Activated naive CD4-positive, alpha-beta T cell treated with anti-CD3 and anti-CD28 coated beads for 36 hours (primary cell): ENCODE measurements at regions of chr1 and their contacts with region 1.

Region 1: DNA sequence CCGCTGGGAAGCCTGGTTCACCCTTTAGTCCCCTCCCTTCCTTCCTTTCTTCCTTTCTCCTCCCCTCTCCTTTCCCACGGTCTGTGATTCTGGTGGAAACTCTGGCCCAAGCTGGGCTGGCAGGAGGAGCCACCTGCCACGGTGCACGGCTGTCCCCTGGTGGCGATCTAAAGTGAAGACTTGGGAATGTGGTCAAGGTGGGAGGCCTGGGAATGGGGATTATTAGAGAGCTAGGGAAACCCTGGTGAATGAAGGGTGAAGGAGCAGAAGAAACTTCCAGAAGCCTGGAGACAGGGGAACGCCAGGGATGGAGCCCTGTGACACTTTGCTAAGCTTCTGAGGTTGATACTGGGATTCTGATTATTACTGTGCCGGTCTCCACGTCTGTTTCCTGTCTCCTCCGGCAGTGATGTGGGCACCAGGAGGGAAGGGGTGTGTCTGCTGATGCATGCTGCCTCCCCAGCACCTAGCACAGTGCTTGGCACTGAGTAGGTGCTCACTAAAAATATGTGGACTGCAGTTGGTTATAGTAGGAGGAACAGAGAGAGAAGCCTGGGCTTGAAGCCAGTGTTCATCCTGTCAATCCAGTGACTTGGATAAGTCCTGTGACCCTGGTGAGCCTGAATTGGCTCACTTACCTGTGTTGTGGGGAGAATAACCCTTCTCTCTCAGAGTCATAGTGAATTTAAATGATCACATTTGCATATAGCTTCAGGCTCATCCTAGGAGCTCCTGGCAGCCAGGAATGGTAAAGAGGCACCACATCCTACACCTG is 71.2 kb upstream of the NBPF3 start:
- DNase-seq: peak; percentile 70
- H3K4me3 Mint-ChIP-seq: no peak overlapping the region
- H3K27ac Mint-ChIP-seq: peak overlapping the region; percentile 43
- H3K4me1 Mint-ChIP-seq: peaks cover 12% of the 10 kb centered on the region
- H3K27me3 Mint-ChIP-seq: no peaks in the 10 kb centered on the region

Region 2: DNA sequence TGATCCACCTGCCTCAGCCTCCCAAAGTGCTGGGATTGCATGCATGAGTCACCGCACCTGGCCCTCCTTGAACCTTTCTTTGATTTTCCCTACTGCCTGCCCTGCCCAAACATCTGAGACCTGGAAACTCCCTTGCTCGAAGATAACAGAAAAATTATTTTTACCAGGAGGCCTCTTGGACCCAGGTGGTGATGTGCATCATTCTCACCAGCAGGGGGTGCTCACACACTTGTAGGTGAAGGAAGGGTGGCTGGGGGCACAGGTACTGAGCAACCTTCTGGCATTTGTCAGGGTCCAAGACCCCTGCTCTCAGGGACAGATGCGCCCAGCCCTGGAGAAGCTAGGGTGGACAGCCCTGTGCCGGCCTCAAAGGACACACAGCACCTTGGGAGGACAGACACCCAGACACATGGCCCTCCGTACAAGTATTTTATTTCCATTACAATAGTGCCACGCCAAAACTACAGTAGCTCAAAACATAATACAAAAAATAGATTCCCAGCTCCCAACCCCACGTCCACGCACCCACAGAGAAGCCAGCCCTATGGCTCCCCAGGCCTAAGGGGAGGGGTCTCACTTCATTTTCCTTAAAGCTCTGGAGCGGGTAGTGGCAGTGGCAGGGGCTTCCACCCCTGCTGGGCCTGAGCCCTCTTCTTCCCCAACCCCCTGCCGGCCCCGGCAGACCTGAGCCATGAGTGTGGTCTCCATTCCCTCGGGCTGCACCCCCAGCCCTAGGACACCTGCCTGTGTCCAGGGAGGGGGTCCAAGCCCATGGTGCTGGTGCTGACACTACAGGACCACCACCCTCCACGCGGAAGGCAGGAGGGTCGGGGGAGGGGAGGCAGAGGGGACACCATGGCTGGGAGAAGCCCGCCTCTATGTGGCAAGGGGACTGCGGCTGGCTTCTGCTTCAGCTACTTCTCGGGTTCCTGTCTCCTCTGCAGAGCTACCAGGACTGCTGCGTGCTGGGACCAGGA is 151.6 kb before region 1 on chr1:
- CTCF ChIA-PET with region 1: interaction called, 45 read pairs
- intact Hi-C with region 1: loop called (anchors 1 kb)
- DNase-seq: peak; percentile 89
- H3K4me3 Mint-ChIP-seq: no peak overlapping the region
- H3K27ac Mint-ChIP-seq: peak overlapping the region; percentile 50
- H3K4me1 Mint-ChIP-seq: peaks cover 7% of the 10 kb centered on the region
- H3K27me3 Mint-ChIP-seq: no peaks in the 10 kb centered on the region

Region 3: GRCh38 chr1:21232044-21232443 is 136.7 kb before region 1 on chr1:
- CTCF ChIA-PET with region 1: interaction called, 106 read pairs
- intact Hi-C with region 1: loop called (anchors 1 kb)
- DNase-seq: peak; percentile 42
- H3K4me3 Mint-ChIP-seq: no peak overlapping the region
- H3K27ac Mint-ChIP-seq: no peak overlapping the region
- H3K4me1 Mint-ChIP-seq: no peaks in the 10 kb centered on the region
- H3K27me3 Mint-ChIP-seq: no peaks in the 10 kb centered on the region

Region 4: GRCh38 chr1:21244986-21245687 is 123.6 kb before region 1 on chr1:
- CTCF ChIA-PET with region 1: interaction called, 23 read pairs
- intact Hi-C with region 1: no loop called
- DNase-seq: no peak
- H3K4me3 Mint-ChIP-seq: no peak overlapping the region
- H3K27ac Mint-ChIP-seq: no peak overlapping the region
- H3K4me1 Mint-ChIP-seq: no peaks in the 10 kb centered on the region
- H3K27me3 Mint-ChIP-seq: no peaks in the 10 kb centered on the region

Region 5: GRCh38 chr1:21468599-21468998 is 99.9 kb after region 1 on chr1:
- CTCF ChIA-PET with region 1: no interaction called
- intact Hi-C with region 1: loop called (anchors 2 kb)
- DNase-seq: peak; percentile 57
- H3K4me3 Mint-ChIP-seq: no peak overlapping the region
- H3K27ac Mint-ChIP-seq: no peak overlapping the region
- H3K4me1 Mint-ChIP-seq: no peaks in the 10 kb centered on the region
- H3K27me3 Mint-ChIP-seq: no peaks in the 10 kb centered on the region

Region 6: DNA sequence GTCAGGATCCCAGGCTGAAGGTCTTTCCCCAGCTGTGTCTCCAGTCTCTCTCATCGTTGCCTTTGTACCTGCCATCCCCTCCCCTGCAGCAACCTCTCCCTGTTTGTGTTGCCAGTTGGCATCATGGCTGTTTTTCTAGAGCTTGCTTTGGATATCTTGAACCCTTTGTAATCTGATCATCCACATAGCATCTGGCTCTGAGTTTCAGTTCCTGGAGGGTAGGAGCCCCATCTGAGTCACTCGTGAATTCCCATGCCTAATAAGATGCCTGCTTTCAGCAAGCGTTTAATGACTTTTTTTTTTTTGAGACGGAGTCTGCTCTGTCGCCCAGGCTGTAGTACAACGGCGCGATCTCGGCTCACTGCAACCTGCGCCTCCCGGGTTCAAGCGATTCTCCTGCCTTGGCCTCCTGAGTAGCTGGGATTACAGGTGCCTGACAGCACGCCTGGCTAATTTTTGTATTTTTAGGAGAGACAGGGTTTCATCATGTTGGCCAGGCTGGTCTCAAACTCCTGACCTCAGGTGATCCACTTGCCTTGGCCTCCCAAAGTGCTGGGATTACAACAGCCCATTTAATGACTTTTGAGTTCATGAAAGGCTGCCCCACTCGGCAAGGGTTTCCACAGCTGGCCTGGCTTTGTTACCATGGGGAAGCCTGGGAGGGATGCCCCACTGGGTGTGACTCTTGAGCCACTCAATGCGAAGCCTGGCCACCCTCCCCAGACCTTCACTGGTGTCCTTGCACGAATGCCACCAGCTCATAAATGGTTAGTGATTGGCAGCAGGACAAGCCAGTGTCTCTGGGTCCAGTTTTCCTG is 152.4 kb after region 1 on chr1:
- CTCF ChIA-PET with region 1: no interaction called
- intact Hi-C with region 1: no loop called
- DNase-seq: no peak
- H3K4me3 Mint-ChIP-seq: no peak overlapping the region
- H3K27ac Mint-ChIP-seq: no peak overlapping the region
- H3K4me1 Mint-ChIP-seq: no peaks in the 10 kb centered on the region
- H3K27me3 Mint-ChIP-seq: no peaks in the 10 kb centered on the region